Endothelial cell of umbilical vein (primary cell): ENCODE measurements at regions of chr3 and their contacts with region 1.

Region 1: GRCh38 chr3:50298836-50299637 is at the starts of genes HYAL3 and NAA80:
- DNase-seq: peak; percentile 100
- H3K4me3 ChIP-seq: peak within 1 kb of the TSS; percentile 51 to 69 (median 64)
- H3K27ac ChIP-seq: peak within 1 kb of the TSS; percentile 70
- H3K4me1 ChIP-seq: peaks cover 25% of the 10 kb centered on the region
- H3K27me3 ChIP-seq: no peaks in the 10 kb centered on the region
- CTCF ChIP-seq: peak in 1 of 2 donors; percentile 39
- POLR2A ChIP-seq: peak; percentile 97
- total RNA-seq, gene HYAL3: 3.8 and 4.8 TPM in 2 replicates
- total RNA-seq, gene NAA80: 9.0 and 9.7 TPM in 2 replicates

Region 2: GRCh38 chr3:50220109-50220508 is 78.9 kb before region 1 on chr3:
- CTCF ChIA-PET with region 1: no interaction called
- POLR2A ChIA-PET with region 1: no interaction called
- dilution Hi-C with region 1: no loop called
- intact Hi-C with region 1: no loop called
- DNase-seq: no peak
- H3K4me3 ChIP-seq: no peak overlapping the region
- H3K27ac ChIP-seq: no peak overlapping the region
- H3K4me1 ChIP-seq: no peaks in the 10 kb centered on the region
- H3K27me3 ChIP-seq: no peaks in the 10 kb centered on the region
- CTCF ChIP-seq: no peak
- POLR2A ChIP-seq: no peak

Region 3: DNA sequence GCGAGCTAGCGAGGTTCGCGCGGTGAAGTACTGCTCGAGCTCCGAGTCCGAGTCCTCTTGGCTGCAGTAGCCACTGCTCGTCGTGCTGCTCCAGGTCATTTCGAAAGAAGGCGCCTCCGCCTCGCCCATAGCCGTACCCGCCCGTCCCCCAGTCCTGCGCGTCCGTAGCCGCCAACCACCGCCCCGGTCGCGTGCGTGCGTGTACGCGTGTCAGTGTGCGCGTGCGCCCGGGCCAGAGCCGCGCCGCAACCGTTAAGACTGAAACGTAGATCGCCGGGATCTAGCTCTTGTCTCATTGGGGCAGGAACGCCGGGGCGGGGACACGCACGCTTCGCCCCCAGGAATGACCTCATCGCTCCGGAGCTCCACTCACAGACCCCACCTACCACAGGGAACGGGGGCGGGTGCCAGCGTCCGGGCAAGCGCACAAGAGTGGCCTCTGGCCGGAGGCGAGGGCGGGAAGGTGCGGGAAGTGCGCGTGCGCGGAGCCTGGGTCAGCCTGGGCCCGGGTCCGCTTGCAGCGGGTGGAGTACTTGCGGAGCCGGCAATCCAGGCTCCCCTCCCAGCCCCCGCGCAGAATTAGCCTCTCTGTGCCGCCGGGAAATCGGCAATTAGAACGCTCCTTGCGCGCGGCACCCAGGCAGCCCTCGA is 38.3 kb after region 1 on chr3:
- CTCF ChIA-PET with region 1: interaction called, 4 read pairs
- POLR2A ChIA-PET with region 1: interaction called, 3 read pairs
- dilution Hi-C with region 1: no loop called
- intact Hi-C with region 1: loop called (anchors 1 kb)
- DNase-seq: peak; percentile 99
- H3K4me3 ChIP-seq: peak overlapping the region; percentile 85 to 93 (median 90)
- H3K27ac ChIP-seq: peak overlapping the region; percentile 95
- H3K4me1 ChIP-seq: peaks cover 43% of the 10 kb centered on the region
- H3K27me3 ChIP-seq: no peaks in the 10 kb centered on the region
- CTCF ChIP-seq: no peak
- POLR2A ChIP-seq: peak; percentile 63